Activated CD4-positive, alpha-beta T cell treated with anti-CD3 and anti-CD28 coated beads, Interleukin-2, amount 10 ng/mL, durations not matched to agents 24 days and 14 days (primary cell): ENCODE measurements at regions of chr18 and their contacts with region 1.

Region 1: GRCh38 chr18:63831080-63831788 is 56.0 kb downstream of the SERPINB7 start:
- DNase-seq: no peak
- H3K4me3 Mint-ChIP-seq: no peak overlapping the region
- H3K27ac Mint-ChIP-seq: no peak overlapping the region
- H3K4me1 Mint-ChIP-seq: peaks cover 7% of the 10 kb centered on the region
- H3K27me3 Mint-ChIP-seq: peaks cover 40% of the 10 kb centered on the region

Region 2: GRCh38 chr18:63192885-63193349 is 638.3 kb before region 1 on chr18:
- intact Hi-C with region 1: no loop called
- DNase-seq: no peak
- H3K4me3 Mint-ChIP-seq: no peak overlapping the region
- H3K27ac Mint-ChIP-seq: peak overlapping the region; percentile 45
- H3K4me1 Mint-ChIP-seq: peaks cover 46% of the 10 kb centered on the region
- H3K27me3 Mint-ChIP-seq: no peaks in the 10 kb centered on the region

Region 3: GRCh38 chr18:63882333-63883141 is 51.3 kb after region 1 on chr18:
- intact Hi-C with region 1: loop called (anchors 5 kb)
- DNase-seq: peak; percentile 31
- H3K4me3 Mint-ChIP-seq: no peak overlapping the region
- H3K27ac Mint-ChIP-seq: no peak overlapping the region
- H3K4me1 Mint-ChIP-seq: peaks cover 8% of the 10 kb centered on the region
- H3K27me3 Mint-ChIP-seq: peaks cover 13% of the 10 kb centered on the region